ENCODE measurements at regions of chr10 and their contacts with region 1.

Region 1: DNA sequence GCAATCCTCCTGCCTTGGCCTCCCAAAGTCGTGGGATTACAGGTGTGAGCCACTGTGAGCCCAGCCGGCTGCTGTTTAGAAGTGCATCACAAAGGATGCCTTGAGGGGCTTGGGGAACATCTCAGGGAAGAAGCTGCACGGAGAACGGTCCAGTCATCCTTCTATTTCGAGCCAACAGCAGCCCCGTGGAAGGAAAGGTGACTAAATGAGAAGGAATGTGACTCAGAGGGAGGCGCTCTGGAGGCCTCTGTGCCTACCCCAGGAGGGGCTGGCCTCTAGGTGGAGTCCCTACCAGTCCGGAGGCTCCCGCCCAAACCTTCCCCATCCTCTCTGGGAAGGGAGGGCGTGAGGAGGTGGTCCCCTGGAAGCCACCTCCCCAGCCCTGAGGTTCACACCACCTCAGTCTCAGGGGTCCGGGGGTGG is 76.2 kb downstream of the CTBP2 start:
- DNase-seq: peak; percentile 56 to 91
- H3K4me3 ChIP-seq: peak overlapping the region in 1 of 2 donors; percentile 46
- H3K27ac ChIP-seq: peak overlapping the region; percentile 90 to 93
- H3K4me1 ChIP-seq: peaks cover 10 to 38% of the 10 kb centered on the region in 2 donors
- H3K27me3 ChIP-seq: no peaks in the 10 kb centered on the region
- CTCF ChIP-seq: peak in 2 of 3 experiments; percentile 10 to 24

Region 2: GRCh38 chr10:124911124-124912067 is 172.8 kb before region 1 on chr10:
- intact Hi-C with region 1: loop called (anchors 5 kb)
- DNase-seq: no peak
- H3K4me3 ChIP-seq: peak overlapping the region in 1 of 2 donors; percentile 30
- H3K27ac ChIP-seq: peak overlapping the region; percentile 86 to 87
- H3K4me1 ChIP-seq: peaks cover 3 to 26% of the 10 kb centered on the region in 2 donors
- H3K27me3 ChIP-seq: no peaks in the 10 kb centered on the region
- CTCF ChIP-seq: no peak

Region 3: DNA sequence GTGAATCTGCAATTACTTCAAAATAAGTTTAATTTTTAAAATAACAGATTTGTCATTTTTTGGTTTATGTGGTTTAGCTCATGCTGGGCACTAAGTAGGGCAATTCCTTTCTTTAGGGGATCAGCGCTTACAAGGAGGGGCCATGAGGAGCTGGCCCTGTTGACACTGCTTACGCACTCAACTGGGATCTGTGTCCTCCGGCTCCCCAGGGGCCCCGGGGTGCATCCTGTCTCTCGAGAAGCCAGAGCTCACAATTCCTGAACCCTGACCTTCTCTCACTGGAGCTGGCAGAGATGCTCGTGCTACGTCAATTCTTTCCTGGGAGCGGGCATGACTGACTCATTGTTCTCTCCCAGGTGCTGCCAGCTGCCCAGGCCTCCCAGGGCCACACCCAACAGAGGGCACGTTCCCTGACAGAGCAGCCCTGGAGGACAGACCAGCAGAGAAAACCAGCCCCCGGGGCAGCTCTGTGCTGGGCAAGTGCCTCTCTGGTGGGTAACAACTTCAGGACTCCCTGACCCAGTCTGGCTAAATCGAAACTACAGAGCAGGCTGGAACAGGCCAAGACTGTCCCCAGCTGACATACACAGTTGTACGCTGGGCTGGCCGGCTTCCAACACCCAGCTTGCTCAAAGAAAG is 39.4 kb after region 1 on chr10:
- intact Hi-C with region 1: loop called (anchors 5 kb)
- DNase-seq: peak; percentile 68 to 88
- H3K4me3 ChIP-seq: peak overlapping the region; percentile 39 to 53
- H3K27ac ChIP-seq: peak overlapping the region; percentile 76 to 82
- H3K4me1 ChIP-seq: peaks cover 2 to 63% of the 10 kb centered on the region in 2 donors
- H3K27me3 ChIP-seq: no peaks in the 10 kb centered on the region
- CTCF ChIP-seq: no peak

Region 4: GRCh38 chr10:125144693-125145623 is 60.8 kb after region 1 on chr10:
- intact Hi-C with region 1: loop called (anchors 2 kb)
- DNase-seq: no peak
- H3K4me3 ChIP-seq: no peak overlapping the region
- H3K27ac ChIP-seq: peak overlapping the region; percentile 30 to 89
- H3K4me1 ChIP-seq: peaks cover 29 to 71% of the 10 kb centered on the region in 2 donors
- H3K27me3 ChIP-seq: no peaks in the 10 kb centered on the region
- CTCF ChIP-seq: peak; percentile 22 to 52 (median 24)

Region 5: GRCh38 chr10:126135204-126135603 is 1051.0 kb after region 1 on chr10:
- intact Hi-C with region 1: no loop called
- DNase-seq: peak in 1 of 2 donors; percentile 31
- H3K4me3 ChIP-seq: no peak overlapping the region
- H3K27ac ChIP-seq: no peak overlapping the region
- H3K4me1 ChIP-seq: no peaks in the 10 kb centered on the region
- H3K27me3 ChIP-seq: no peaks in the 10 kb centered on the region
- CTCF ChIP-seq: no peak